Heart left ventricle (tissue), 16 donors: ENCODE measurements at regions of chr11 and their contacts with region 1.

Region 1: DNA sequence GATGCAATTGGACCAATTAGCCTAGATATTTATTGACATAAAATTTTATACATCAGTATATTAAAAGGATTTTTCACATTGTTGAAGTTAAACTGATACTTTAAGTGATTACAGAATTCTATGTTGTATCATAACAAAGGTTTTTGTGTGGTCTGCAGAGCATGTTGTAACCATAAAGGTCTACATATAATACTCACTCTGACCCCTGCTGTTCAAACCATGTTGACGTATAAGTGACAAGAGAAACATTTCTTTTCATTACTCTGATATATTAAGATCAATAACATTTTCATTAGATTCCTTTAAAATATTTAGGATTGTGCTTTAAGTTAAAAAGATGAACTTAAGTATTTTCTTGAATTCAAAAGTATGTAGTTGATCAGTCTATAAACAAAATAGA is 63.9 kb downstream of the GAS2 start:
- DNase-seq: no peak
- ATAC-seq: peak in 1 of 4 donors; percentile 69
- H3K4me3 ChIP-seq: no peak overlapping the region
- H3K27ac ChIP-seq: no peak overlapping the region
- H3K4me1 ChIP-seq: peaks cover 0 to 11% (median 0%) of the 10 kb centered on the region in 12 donors
- H3K27me3 ChIP-seq: no peaks in the 10 kb centered on the region
- CTCF ChIP-seq: peak in 11 of 12 donors; percentile 5 to 55 (median 37)
- POLR2A ChIP-seq: no peak

Region 2: DNA sequence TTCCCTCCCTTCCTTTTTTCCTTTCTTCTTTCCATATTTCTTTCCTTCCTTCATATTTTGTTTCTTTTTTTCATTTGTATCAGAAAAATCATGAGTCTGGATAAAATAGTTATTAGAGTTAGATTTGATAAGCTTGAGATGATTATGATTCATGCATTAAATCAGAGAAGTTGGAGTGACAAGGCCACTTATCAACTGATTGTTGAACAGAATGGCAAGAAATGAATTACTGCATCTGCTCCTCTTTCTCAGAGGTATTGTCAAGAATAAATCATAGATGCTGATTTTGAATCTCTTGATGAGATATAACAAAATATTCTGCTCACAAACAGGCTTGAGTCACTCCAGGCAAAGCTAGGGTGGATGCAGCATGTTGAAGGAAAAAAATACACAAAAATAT is 592.1 kb before region 1 on chr11:
- intact Hi-C with region 1: no loop called
- DNase-seq: no peak
- ATAC-seq: no peak
- H3K4me3 ChIP-seq: no peak overlapping the region
- H3K27ac ChIP-seq: no peak overlapping the region
- H3K4me1 ChIP-seq: no peaks in the 10 kb centered on the region
- H3K27me3 ChIP-seq: no peaks in the 10 kb centered on the region
- CTCF ChIP-seq: no peak
- POLR2A ChIP-seq: no peak

Region 3: GRCh38 chr11:22337596-22338485 is 392.5 kb before region 1 on chr11 and contains the start of gene SLC17A6:
- intact Hi-C with region 1: loop called in 1 of 10 experiments (anchors 5 kb)
- DNase-seq: no peak
- ATAC-seq: peak in 1 of 4 donors; percentile 42
- H3K4me3 ChIP-seq: no peak within 1 kb of the TSS
- H3K27ac ChIP-seq: no peak within 1 kb of the TSS
- H3K4me1 ChIP-seq: peaks cover 0 to 11% (median 0%) of the 10 kb centered on the region in 12 donors
- H3K27me3 ChIP-seq: peaks cover 15 to 66% (median 57%) of the 10 kb centered on the region in 9 donors
- CTCF ChIP-seq: no peak
- POLR2A ChIP-seq: no peak
- total RNA-seq, gene SLC17A6: not detected

Region 4: GRCh38 chr11:22625448-22626287 is 104.7 kb before region 1 on chr11 and contains the start of gene FANCF:
- intact Hi-C with region 1: loop called in 2 of 10 experiments (anchors 5 kb)
- DNase-seq: peak; percentile 91 to 96 (median 95)
- ATAC-seq: peak; percentile 98 to 99 (median 99)
- H3K4me3 ChIP-seq: peak within 1 kb of the TSS; percentile 59 to 95 (median 80)
- H3K27ac ChIP-seq: peak within 1 kb of the TSS; percentile 59 to 97 (median 89)
- H3K4me1 ChIP-seq: peaks cover 0 to 19% (median 12%) of the 10 kb centered on the region in 12 donors
- H3K27me3 ChIP-seq: no peaks in the 10 kb centered on the region
- CTCF ChIP-seq: no peak
- POLR2A ChIP-seq: peak in 1 of 2 donors; percentile 49
- total RNA-seq, gene FANCF: 4.6 to 8.6 (median 6.2) TPM

Region 5: DNA sequence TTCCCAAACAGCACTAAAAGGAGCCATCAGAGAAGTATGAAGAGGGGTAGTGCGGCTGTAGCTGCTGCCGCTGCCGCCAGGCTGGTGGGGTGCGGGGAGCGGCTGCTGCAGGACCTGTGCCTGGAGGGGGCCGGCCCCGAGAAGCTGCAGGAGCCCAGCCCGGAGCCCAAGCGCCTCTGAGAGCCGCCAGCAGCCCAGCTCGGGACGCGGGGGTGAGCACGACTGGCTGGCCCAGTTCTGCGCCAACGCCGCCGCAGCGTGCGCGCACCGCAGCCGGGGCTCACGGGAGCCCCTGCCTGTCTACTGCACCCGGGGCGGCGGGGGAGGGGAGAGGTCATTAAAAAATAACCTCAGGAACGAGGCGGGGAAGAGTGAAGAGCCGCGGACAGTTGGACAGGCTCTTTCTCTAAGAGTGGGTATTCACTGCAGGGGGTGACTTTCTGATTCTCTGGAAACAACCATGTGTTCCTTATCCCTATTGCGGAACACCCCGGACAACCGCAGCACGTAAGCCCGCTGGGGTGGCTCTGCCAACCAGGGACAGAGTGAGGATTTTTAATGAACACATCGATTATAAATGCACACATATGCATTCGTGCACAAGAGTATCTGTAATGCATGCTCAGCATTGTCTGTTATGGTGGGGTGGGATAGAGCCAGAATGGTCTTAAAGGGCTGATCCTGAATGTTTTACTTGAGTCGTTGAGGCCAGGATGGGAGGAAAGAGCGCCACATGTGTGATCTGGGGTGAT is 63.5 kb before region 1 on chr11:
- intact Hi-C with region 1: loop called in 7 of 10 experiments (anchors 2 to 10 kb)
- DNase-seq: peak; percentile 49 to 79 (median 76)
- ATAC-seq: peak; percentile 68 to 95 (median 88)
- H3K4me3 ChIP-seq: peak overlapping the region; percentile 32 to 66 (median 58)
- H3K27ac ChIP-seq: peak overlapping the region; percentile 63 to 91 (median 79)
- H3K4me1 ChIP-seq: peaks cover 0 to 12% (median 0%) of the 10 kb centered on the region in 12 donors
- H3K27me3 ChIP-seq: peaks cover 0 to 32% (median 0%) of the 10 kb centered on the region in 9 donors
- CTCF ChIP-seq: peak in 4 of 12 donors; percentile 14 to 29 (median 19)
- POLR2A ChIP-seq: no peak

Region 6: GRCh38 chr11:22677153-22677903 is 53.0 kb before region 1 on chr11:
- intact Hi-C with region 1: loop called in 5 of 10 experiments (anchors 2 to 10 kb)
- DNase-seq: peak in 1 of 5 donors; percentile 24
- ATAC-seq: peak; percentile 51 to 78 (median 70)
- H3K4me3 ChIP-seq: no peak overlapping the region
- H3K27ac ChIP-seq: peak overlapping the region in 5 of 12 donors; percentile 22 to 45 (median 35)
- H3K4me1 ChIP-seq: peaks cover 0 to 20% (median 0%) of the 10 kb centered on the region in 12 donors
- H3K27me3 ChIP-seq: no peaks in the 10 kb centered on the region
- CTCF ChIP-seq: no peak
- POLR2A ChIP-seq: no peak

Region 7: DNA sequence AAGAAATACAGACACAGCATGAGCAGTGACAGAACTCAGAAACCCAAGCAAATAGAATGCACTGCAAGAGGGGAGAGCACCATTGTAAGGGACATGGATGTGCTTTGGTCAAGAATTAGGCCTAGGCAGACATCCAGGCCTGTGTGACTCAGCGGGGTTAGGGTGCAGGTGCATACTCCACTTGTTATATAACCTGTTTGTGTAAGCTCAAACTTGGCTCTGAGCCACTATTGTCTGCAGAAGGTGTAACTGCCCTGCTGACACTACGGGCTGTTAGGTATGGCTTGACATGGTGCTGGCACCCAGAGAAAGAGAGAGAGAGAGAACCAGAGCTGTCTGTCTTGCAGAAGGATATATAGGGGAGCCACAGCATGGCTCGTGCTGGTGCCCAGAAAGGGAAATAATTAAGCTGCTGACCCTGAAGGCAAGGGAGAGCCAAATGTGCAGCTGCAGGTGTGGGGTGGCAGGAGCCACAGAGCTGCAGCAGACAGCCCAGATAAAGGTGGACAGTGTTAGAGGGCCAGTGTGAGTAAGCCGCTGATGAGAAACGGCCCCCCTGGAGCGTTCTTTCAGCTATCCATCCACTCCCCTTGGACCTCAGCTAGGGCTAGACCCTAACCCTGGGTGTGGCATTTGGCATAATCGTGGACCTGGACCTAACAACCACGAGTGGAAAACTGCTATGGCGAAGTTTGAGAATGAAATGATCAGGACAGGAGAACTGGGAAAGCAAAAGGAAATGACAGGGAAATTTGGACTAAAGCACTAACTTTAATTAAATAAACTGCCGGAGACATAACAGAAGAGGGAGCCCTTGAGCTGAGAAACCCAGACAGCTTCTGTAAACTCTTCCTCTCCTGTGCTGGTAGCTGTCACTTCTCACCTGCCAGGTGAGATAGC is 382.9 kb after region 1 on chr11:
- intact Hi-C with region 1: no loop called
- DNase-seq: peak in 1 of 5 donors; percentile 29
- ATAC-seq: peak in 1 of 4 donors; percentile 33
- H3K4me3 ChIP-seq: no peak overlapping the region
- H3K27ac ChIP-seq: no peak overlapping the region
- H3K4me1 ChIP-seq: peaks cover 0 to 3% (median 0%) of the 10 kb centered on the region in 12 donors
- H3K27me3 ChIP-seq: no peaks in the 10 kb centered on the region
- CTCF ChIP-seq: peak in 10 of 12 donors; percentile 16 to 54 (median 33)
- POLR2A ChIP-seq: no peak